CD4-positive, alpha-beta T cell (primary cell): ENCODE measurements at regions of chr11 and their contacts with region 1.

Region 1: DNA sequence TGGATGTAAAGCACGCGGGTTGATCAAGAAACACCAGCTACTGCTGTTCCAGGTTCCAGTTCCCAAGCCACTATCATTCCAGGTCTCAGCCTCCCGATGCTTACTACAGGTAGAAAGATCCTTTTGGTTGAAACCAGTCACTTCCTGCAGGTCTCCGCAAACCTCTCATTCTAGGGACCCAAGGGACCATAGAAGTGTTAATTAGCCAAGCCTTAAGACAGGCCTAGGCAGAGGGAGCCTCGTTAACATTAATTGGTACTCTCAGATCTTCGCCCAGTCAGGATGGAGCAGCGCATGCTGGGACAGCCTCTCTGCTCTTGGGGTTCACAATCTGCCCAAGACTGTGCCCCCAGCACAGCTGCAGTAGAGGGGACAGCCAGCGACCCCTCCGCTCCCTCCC is 11.2 kb upstream of the OAF start:
- DNase-seq: no peak
- ATAC-seq: no peak
- H3K4me3 ChIP-seq: no peak overlapping the region
- H3K4me3 Mint-ChIP-seq: no peak overlapping the region
- H3K27ac ChIP-seq: no peak overlapping the region
- H3K27ac Mint-ChIP-seq: no peak overlapping the region
- H3K4me1 ChIP-seq: no peaks in the 10 kb centered on the region
- H3K4me1 Mint-ChIP-seq: no peaks in the 10 kb centered on the region
- H3K27me3 ChIP-seq: peaks cover 3% of the 10 kb centered on the region in 2 experiments
- H3K27me3 Mint-ChIP-seq: peaks cover 27% of the 10 kb centered on the region
- CTCF ChIP-seq: no peak

Region 2: DNA sequence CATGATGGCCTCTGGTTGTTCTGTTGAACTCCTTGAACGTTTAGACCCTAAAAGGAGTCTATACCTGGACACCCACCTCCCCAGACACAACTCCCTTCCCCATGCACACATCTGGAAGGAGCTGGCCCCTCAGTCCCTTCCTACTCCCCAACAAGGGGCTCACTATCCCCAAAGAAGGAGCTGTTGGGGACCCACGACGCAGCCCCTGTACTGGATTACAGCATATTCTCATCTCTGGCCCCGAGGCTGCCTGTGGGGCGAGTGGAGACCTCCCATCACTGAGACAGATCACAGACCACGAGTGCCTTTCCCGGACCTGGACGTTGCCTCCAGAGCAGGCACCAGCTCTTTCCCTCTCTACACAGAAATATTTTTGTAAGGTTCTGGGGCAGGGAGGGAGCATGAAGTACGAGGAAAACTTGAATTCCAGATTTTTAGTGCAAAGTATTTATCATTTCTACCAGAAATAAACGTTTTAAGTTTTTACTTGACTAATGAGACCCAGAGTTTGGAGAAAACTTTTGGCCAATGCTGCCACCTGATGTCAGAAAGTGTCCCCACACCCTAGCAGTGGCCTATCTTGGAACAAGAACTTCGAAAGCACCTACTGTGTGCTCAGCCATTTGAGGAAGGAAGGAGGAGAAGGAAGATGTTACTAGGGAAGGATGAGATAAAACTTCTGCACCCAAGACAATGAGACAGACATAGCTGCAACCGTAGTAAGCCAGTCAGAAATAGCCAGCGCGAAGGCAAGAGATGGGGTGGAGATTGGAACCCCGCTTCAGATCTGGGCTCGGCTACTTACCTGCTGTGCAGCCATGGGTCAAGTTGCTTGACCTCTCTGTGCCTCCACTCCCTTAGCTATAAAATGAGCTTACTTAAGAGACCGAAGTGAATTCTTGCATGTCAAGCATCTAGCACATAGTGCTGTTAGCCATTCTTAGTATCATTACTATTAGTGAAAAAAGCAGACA is 30.1 kb after region 1 on chr11:
- CTCF ChIA-PET with region 1: no interaction called
- POLR2A ChIA-PET with region 1: no interaction called
- intact Hi-C with region 1: loop called in 1 of 2 experiments (anchors 2 kb)
- DNase-seq: peak in 4 of 14 experiments; percentile 10 to 47 (median 30)
- ATAC-seq: no peak
- H3K4me3 ChIP-seq: no peak overlapping the region
- H3K4me3 Mint-ChIP-seq: no peak overlapping the region
- H3K27ac ChIP-seq: no peak overlapping the region
- H3K27ac Mint-ChIP-seq: no peak overlapping the region
- H3K4me1 ChIP-seq: no peaks in the 10 kb centered on the region
- H3K4me1 Mint-ChIP-seq: no peaks in the 10 kb centered on the region
- H3K27me3 ChIP-seq: peaks cover 6 to 7% of the 10 kb centered on the region in 2 experiments
- H3K27me3 Mint-ChIP-seq: peaks cover 27% of the 10 kb centered on the region
- CTCF ChIP-seq: peak; percentile 52

Region 3: DNA sequence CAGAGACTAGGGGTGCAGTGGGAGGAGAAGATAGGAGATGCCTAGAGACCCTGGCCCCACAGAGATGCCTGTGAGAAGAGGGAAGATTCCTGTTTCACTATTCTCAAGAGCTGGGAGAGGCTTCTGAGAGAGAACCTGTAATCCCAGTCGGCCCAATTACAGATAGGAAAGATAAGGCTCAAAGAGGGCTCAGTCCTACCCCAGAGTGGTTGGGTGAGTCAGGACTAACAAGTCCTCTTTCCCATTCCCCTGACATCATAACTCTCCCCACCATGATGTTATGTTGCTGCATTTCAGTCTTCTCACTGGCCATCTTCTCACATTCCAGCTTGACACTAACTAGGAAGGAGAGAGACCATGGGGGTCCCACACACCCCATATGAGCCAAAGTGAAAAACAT is 154.5 kb after region 1 on chr11:
- CTCF ChIA-PET with region 1: no interaction called
- POLR2A ChIA-PET with region 1: no interaction called
- intact Hi-C with region 1: no loop called
- DNase-seq: no peak
- ATAC-seq: no peak
- H3K4me3 ChIP-seq: no peak overlapping the region
- H3K4me3 Mint-ChIP-seq: no peak overlapping the region
- H3K27ac ChIP-seq: no peak overlapping the region
- H3K27ac Mint-ChIP-seq: no peak overlapping the region
- H3K4me1 ChIP-seq: no peaks in the 10 kb centered on the region
- H3K4me1 Mint-ChIP-seq: no peaks in the 10 kb centered on the region
- H3K27me3 ChIP-seq: peaks cover 22 to 25% of the 10 kb centered on the region in 2 experiments
- H3K27me3 Mint-ChIP-seq: peaks cover 79% of the 10 kb centered on the region
- CTCF ChIP-seq: no peak

Region 4: DNA sequence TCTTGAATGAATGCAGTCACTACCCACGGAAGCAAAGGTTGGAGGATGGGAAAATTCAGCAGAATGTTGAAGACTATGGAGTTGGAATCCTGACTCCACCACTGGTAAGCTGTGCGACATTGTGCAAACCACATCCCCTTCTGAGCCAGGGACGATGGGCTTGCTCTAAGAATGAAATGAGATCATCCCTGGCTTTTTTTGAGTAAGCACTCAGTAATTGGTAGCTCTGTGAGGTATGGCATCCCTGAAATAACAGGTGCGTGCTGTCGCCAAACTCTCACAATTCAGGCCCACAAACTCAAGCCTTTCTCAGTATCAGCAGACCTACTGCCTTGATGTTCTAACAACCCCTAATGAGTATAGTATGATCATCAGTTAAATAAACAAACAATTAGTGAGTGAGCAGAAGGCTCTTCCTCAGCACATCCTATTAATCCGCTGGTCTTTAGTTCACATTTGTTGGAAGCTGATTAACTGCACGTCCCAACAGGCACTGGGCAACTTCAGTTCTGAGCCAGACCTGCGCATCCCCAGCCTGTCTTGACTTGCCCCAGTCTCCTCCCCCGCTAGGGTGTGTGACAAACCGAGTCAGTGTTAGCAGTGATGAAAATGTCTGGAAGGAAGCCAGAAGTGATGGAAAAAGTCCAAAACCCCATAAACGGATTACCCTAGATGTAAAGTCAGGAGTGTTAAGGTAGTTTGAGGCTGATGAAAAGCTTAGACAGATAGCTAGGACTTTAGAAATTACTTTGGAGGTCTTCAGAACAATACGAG is 547.4 kb after region 1 on chr11:
- CTCF ChIA-PET with region 1: no interaction called
- POLR2A ChIA-PET with region 1: no interaction called
- intact Hi-C with region 1: no loop called
- DNase-seq: no peak
- ATAC-seq: no peak
- H3K4me3 ChIP-seq: no peak overlapping the region
- H3K4me3 Mint-ChIP-seq: no peak overlapping the region
- H3K27ac ChIP-seq: no peak overlapping the region
- H3K27ac Mint-ChIP-seq: no peak overlapping the region
- H3K4me1 ChIP-seq: no peaks in the 10 kb centered on the region
- H3K4me1 Mint-ChIP-seq: no peaks in the 10 kb centered on the region
- H3K27me3 ChIP-seq: peaks cover 8 to 11% of the 10 kb centered on the region in 2 experiments
- H3K27me3 Mint-ChIP-seq: peaks cover 32% of the 10 kb centered on the region
- CTCF ChIP-seq: no peak